ENCODE measurements at regions of chr11 and their contacts with region 1.

Region 1: GRCh38 chr11:68297812-68298658 is 14.4 kb upstream of the LRP5 start:
- DNase-seq: peak; percentile 52 to 88 (median 70)
- ATAC-seq: peak; percentile 98
- H3K4me3 ChIP-seq: no peak overlapping the region
- H3K4me3 Mint-ChIP-seq: no peak overlapping the region
- H3K27ac ChIP-seq: no peak overlapping the region
- H3K27ac Mint-ChIP-seq: no peak overlapping the region
- H3K4me1 ChIP-seq: peaks cover 3% of the 10 kb centered on the region
- H3K4me1 Mint-ChIP-seq: no peaks in the 10 kb centered on the region
- H3K27me3 ChIP-seq: no peaks in the 10 kb centered on the region
- H3K27me3 Mint-ChIP-seq: no peaks in the 10 kb centered on the region
- CTCF ChIP-seq: peak; percentile 95

Region 2: DNA sequence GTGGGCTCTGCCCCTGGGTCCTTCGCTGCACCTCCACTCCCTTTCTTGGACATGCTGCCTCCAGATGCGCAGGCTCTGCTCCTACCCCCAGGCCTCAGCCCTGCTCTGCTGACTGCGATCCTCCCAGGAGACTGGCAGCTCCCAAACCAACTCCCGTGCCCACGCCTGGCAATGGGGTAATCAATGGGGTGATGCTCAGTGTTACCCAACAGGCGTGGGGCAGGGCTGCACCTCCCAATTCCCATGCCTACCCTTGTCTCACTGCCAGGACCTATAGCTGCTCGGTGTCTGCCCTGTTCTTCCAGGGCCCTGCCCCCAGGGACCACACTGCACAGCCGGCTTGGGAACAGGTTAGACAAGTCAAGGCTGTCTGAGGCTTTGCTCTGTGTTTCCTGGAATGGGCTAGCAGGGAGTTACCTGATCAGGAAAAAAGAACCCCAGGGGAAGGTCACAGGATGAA is 623.6 kb before region 1 on chr11 and contains the start of gene ALDH3B2:
- CTCF ChIA-PET with region 1: no interaction called
- POLR2A ChIA-PET with region 1: no interaction called
- intact Hi-C with region 1: no loop called
- DNase-seq: no peak
- ATAC-seq: no peak
- H3K4me3 ChIP-seq: no peak within 1 kb of the TSS
- H3K4me3 Mint-ChIP-seq: no peak within 1 kb of the TSS
- H3K27ac ChIP-seq: no peak within 1 kb of the TSS
- H3K27ac Mint-ChIP-seq: no peak within 1 kb of the TSS
- H3K4me1 ChIP-seq: no peaks in the 10 kb centered on the region
- H3K4me1 Mint-ChIP-seq: no peaks in the 10 kb centered on the region
- H3K27me3 ChIP-seq: peaks cover 0 to 4% of the 10 kb centered on the region in 2 experiments
- H3K27me3 Mint-ChIP-seq: peaks cover 11% of the 10 kb centered on the region
- CTCF ChIP-seq: no peak
- total RNA-seq, gene ALDH3B2: not detected

Region 3: GRCh38 chr11:68213555-68214174 is 84.4 kb before region 1 on chr11:
- CTCF ChIA-PET with region 1: interaction called, 20 read pairs
- POLR2A ChIA-PET with region 1: no interaction called
- intact Hi-C with region 1: loop called (anchors 1 to 5 kb)
- DNase-seq: peak; percentile 67 to 96 (median 79)
- ATAC-seq: peak; percentile 33
- H3K4me3 ChIP-seq: peak overlapping the region; percentile 79 to 89
- H3K4me3 Mint-ChIP-seq: peak overlapping the region; percentile 81
- H3K27ac ChIP-seq: peak overlapping the region; percentile 55 to 58
- H3K27ac Mint-ChIP-seq: peak overlapping the region; percentile 90
- H3K4me1 ChIP-seq: peaks cover 41% of the 10 kb centered on the region
- H3K4me1 Mint-ChIP-seq: peaks cover 46% of the 10 kb centered on the region
- H3K27me3 ChIP-seq: no peaks in the 10 kb centered on the region
- H3K27me3 Mint-ChIP-seq: peaks cover 2% of the 10 kb centered on the region
- CTCF ChIP-seq: no peak

Region 4: GRCh38 chr11:68257475-68258362 is 40.3 kb before region 1 on chr11:
- CTCF ChIA-PET with region 1: interaction called, 359 read pairs
- POLR2A ChIA-PET with region 1: interaction called, 5 read pairs
- intact Hi-C with region 1: loop called (anchors 1 kb)
- DNase-seq: peak; percentile 88 to 99 (median 91)
- ATAC-seq: peak; percentile 96
- H3K4me3 ChIP-seq: no peak overlapping the region
- H3K4me3 Mint-ChIP-seq: no peak overlapping the region
- H3K27ac ChIP-seq: no peak overlapping the region
- H3K27ac Mint-ChIP-seq: no peak overlapping the region
- H3K4me1 ChIP-seq: peaks cover 5% of the 10 kb centered on the region
- H3K4me1 Mint-ChIP-seq: peaks cover 3% of the 10 kb centered on the region
- H3K27me3 ChIP-seq: no peaks in the 10 kb centered on the region
- H3K27me3 Mint-ChIP-seq: no peaks in the 10 kb centered on the region
- CTCF ChIP-seq: peak; percentile 70

Region 5: GRCh38 chr11:68287419-68287818 is 10.6 kb before region 1 on chr11:
- CTCF ChIA-PET with region 1: interaction called, 12 read pairs
- POLR2A ChIA-PET with region 1: no interaction called
- intact Hi-C with region 1: no loop called
- DNase-seq: no peak
- ATAC-seq: no peak
- H3K4me3 ChIP-seq: no peak overlapping the region
- H3K4me3 Mint-ChIP-seq: no peak overlapping the region
- H3K27ac ChIP-seq: no peak overlapping the region
- H3K27ac Mint-ChIP-seq: no peak overlapping the region
- H3K4me1 ChIP-seq: peaks cover 6% of the 10 kb centered on the region
- H3K4me1 Mint-ChIP-seq: peaks cover 9% of the 10 kb centered on the region
- H3K27me3 ChIP-seq: no peaks in the 10 kb centered on the region
- H3K27me3 Mint-ChIP-seq: peaks cover 3% of the 10 kb centered on the region
- CTCF ChIP-seq: no peak

Region 6: GRCh38 chr11:68396526-68396925 is 98.5 kb after region 1 on chr11:
- CTCF ChIA-PET with region 1: no interaction called
- POLR2A ChIA-PET with region 1: no interaction called
- intact Hi-C with region 1: no loop called
- DNase-seq: no peak
- ATAC-seq: no peak
- H3K4me3 ChIP-seq: no peak overlapping the region
- H3K4me3 Mint-ChIP-seq: no peak overlapping the region
- H3K27ac ChIP-seq: no peak overlapping the region
- H3K27ac Mint-ChIP-seq: no peak overlapping the region
- H3K4me1 ChIP-seq: no peaks in the 10 kb centered on the region
- H3K4me1 Mint-ChIP-seq: no peaks in the 10 kb centered on the region
- H3K27me3 ChIP-seq: no peaks in the 10 kb centered on the region
- H3K27me3 Mint-ChIP-seq: no peaks in the 10 kb centered on the region
- CTCF ChIP-seq: no peak

Region 7: GRCh38 chr11:68447015-68447801 is 149.2 kb after region 1 on chr11:
- CTCF ChIA-PET with region 1: no interaction called
- POLR2A ChIA-PET with region 1: no interaction called
- intact Hi-C with region 1: loop called (anchors 1 kb)
- DNase-seq: peak; percentile 57 to 85 (median 76)
- ATAC-seq: peak; percentile 99
- H3K4me3 ChIP-seq: no peak overlapping the region
- H3K4me3 Mint-ChIP-seq: peak overlapping the region; percentile 26
- H3K27ac ChIP-seq: no peak overlapping the region
- H3K27ac Mint-ChIP-seq: no peak overlapping the region
- H3K4me1 ChIP-seq: peaks cover 7% of the 10 kb centered on the region
- H3K4me1 Mint-ChIP-seq: peaks cover 4% of the 10 kb centered on the region
- H3K27me3 ChIP-seq: no peaks in the 10 kb centered on the region
- H3K27me3 Mint-ChIP-seq: no peaks in the 10 kb centered on the region
- CTCF ChIP-seq: peak; percentile 84